ENCODE measurements at regions of chr1 and their contacts with region 1.

Region 1: GRCh38 chr1:26431979-26432695 is at the start of gene DHDDS:
- DNase-seq: peak; percentile 99
- ATAC-seq: peak; percentile 97
- H3K4me3 Mint-ChIP-seq: peak within 1 kb of the TSS; percentile 94
- H3K27ac Mint-ChIP-seq: peak within 1 kb of the TSS; percentile 94
- H3K4me1 Mint-ChIP-seq: peaks cover 12% of the 10 kb centered on the region
- H3K27me3 Mint-ChIP-seq: peaks cover 2% of the 10 kb centered on the region
- total RNA-seq, gene DHDDS: 45.9 to 48.2 TPM

Region 2: DNA sequence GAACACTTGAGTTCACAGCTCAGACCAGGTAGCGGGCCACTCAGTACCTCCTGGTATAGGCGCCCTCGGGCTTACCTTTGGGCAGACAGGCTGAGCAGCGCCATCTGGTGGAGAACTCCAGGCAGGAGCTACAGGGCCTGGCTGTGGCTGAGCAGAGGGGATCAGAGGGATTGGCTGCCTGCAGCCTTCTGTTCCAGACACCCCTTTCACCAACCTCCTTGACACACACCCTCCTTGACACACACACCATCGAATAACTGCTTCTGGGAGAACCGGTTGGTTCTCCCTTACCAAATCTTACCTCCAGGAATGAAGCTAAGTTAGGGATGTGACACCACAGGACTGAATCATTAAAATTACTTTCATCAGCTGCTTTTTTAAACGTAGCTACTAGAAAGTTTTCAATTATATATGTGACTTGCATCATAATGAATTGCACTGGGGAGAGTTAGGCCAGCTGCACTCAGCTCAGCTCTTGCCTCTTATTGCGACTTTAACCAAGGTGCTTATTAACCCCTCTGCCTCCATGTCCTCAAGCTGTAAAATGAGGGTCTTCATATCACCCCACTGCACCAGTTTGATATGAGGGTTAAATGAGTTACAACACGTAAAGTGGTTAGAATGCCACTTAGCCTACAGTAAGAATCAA is 14.9 kb before region 1 on chr1:
- POLR2A ChIA-PET with region 1: interaction called, 10 read pairs
- DNase-seq: peak; percentile 84
- ATAC-seq: peak; percentile 100
- H3K4me3 Mint-ChIP-seq: no peak overlapping the region
- H3K27ac Mint-ChIP-seq: no peak overlapping the region
- H3K4me1 Mint-ChIP-seq: peaks cover 9% of the 10 kb centered on the region
- H3K27me3 Mint-ChIP-seq: peaks cover 58% of the 10 kb centered on the region

Region 3: DNA sequence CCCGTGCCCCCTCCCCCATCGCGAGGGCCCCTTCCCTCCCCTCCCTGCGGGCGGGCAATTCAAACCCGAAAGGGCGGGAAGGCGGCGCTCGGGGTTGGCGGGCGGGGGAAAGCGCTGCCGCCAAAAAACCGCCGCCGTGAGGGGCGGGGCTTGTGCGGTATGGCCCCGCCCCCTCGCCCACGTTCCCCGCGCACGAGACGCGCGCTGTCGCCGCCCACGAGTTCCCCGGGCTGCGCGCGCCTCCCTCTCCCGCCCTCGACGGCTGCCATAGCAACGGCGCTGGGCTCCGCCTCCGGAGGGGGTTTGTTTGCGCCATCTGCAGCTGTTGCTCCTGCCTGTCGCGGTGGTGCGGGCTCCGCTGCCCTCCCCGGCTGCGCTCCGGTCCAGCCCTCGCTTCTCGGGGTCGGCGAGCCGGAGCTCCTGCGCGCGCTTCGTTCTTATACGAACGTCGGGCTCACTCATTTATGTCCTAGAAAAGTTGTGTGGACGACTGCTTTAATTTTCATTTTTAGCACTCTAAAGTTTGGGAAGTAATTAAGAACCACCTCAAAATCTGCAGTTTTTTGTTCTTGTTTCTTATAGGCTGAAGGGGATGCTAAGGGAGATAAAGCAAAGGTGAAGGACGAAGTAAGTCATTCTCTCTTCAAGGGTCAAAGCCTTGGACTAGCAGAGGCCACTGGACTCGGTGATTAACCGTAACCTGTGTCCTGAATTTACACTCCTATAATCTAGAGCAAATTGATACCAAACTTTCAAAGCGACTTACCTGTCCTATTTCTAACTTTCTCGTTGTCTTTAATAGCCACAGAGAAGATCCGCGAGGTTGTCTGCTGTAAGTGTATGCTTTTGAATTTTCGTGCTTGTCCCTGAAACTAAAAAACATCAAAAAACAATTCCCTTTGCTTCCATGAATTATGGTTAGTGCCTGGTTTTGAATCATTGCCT is 41.0 kb after region 1 on chr1:
- POLR2A ChIA-PET with region 1: interaction called, 22 read pairs
- DNase-seq: peak; percentile 97
- ATAC-seq: peak; percentile 69
- H3K4me3 Mint-ChIP-seq: peak overlapping the region; percentile 91
- H3K27ac Mint-ChIP-seq: peak overlapping the region; percentile 64
- H3K4me1 Mint-ChIP-seq: peaks cover 52% of the 10 kb centered on the region
- H3K27me3 Mint-ChIP-seq: no peaks in the 10 kb centered on the region

Measured in activated naive CD8-positive, alpha-beta T cell treated with anti-CD3 and anti-CD28 coated beads, Interleukin-2, amount 10 ng/mL, durations not matched to agents 7 days and 5 days (primary cell).